Common myeloid progenitor, CD34-positive (primary cell): ENCODE measurements at regions of chrX and their contacts with region 1.

Region 1: DNA sequence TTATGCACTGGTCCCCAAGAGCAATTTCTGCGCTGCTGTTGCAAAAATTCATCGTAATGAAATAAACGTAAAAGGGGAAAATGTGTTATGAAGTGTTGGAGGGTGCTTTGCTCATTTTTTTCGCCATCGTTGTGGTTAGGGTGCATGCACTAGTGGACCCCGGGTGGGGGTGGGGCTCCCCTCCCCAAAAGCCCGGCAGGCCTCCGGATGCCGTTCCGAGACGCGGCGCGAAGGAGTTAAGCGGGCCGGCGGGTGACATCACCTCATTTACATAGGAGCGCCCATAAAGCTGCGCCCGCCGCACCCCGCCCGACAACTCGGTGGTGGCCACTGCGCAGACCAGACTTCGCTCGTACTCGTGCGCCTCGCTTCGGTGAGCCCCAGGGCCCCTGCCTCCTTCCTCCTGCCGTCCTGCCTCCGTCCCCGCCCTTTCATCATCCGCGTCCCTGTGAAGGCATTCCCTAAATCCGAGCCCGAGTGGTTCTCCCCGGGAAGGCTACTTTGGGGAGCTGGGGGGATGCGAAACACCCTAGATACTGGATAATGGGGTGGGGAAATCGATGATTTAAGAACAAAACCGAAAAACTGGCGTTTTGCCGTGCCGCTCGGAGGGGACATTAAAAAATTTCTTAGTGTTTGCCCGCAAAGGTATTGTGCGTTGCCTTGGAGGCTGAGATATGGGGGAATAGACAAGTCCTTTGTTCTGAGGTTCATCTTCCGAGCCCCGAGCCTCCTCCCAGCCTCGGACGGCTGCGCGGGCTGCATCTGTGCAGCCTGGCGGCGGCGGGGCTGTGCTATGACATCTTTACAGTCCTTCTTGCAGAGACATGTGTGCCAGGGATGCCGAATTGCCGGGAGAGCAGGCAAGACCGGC is at the start of gene TMSB4X:
- DNase-seq: peak; percentile 76 to 86 (median 80)
- H3K4me3 ChIP-seq: peak within 1 kb of the TSS; percentile 68 to 92 (median 81)
- H3K27ac ChIP-seq: peak within 1 kb of the TSS; percentile 80 to 93
- H3K4me1 ChIP-seq: peaks cover 21 to 63% (median 39%) of the 10 kb centered on the region in 4 experiments
- H3K27me3 ChIP-seq: peaks cover 0 to 46% (median 0%) of the 10 kb centered on the region in 5 experiments

Region 2: GRCh38 chrX:12955882-12956703 is 18.9 kb before region 1 on chrX:
- CTCF ChIA-PET with region 1: interaction called, 50 read pairs
- POLR2A ChIA-PET with region 1: interaction called, 31 read pairs
- DNase-seq: peak; percentile 82 to 97 (median 96)
- H3K4me3 ChIP-seq: peak overlapping the region in 6 of 7 experiments; percentile 21 to 59 (median 49)
- H3K27ac ChIP-seq: peak overlapping the region; percentile 51 to 87
- H3K4me1 ChIP-seq: peaks cover 25 to 72% (median 58%) of the 10 kb centered on the region in 4 experiments
- H3K27me3 ChIP-seq: no peaks in the 10 kb centered on the region

Region 3: DNA sequence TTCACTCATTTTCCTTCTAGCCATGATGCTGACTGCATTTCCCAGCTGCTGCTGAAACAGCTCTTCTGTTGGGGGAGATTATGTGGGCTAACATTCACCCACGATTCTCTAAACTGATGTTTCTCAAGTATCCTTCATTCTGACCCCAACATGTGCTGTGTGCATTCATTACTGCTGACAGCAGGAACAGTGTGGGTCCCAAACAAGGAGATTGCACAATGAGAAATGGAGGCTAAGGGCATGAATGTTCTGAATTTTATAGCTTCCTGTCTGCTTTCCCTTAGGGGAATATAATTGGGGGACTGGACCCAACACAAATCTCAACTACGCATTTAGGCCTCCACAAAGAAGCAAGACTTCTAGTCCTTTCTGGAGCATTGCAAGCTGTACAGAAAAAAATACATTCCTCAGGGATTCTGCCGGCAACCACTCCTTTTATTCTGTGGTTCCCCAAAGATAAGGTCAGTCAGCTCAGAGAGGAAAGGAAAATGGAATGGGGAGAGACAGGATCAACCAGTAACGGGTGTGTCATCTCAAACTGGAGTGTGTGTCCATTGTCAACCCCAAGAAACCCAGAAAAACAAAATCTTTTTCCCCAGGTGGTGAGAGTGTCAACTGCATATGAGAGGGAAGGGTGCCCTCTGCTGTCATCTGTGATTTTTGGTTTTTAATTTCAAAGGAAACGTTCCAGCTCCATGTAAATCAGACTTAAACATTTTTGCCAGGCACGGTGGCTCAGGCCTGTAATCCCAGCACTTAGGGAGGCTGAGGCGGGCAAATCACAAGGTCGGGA is 512.9 kb after region 1 on chrX:
- CTCF ChIA-PET with region 1: interaction called, 23 read pairs
- POLR2A ChIA-PET with region 1: interaction called, 5 read pairs
- DNase-seq: peak; percentile 61 to 77 (median 72)
- H3K4me3 ChIP-seq: peak overlapping the region in 1 of 7 experiments; percentile 11
- H3K27ac ChIP-seq: no peak overlapping the region
- H3K4me1 ChIP-seq: peaks cover 9 to 11% (median 10%) of the 10 kb centered on the region in 4 experiments
- H3K27me3 ChIP-seq: peaks cover 0 to 3% (median 0%) of the 10 kb centered on the region in 5 experiments